Activated CD8-positive, alpha-beta T cell treated with anti-CD3 and anti-CD28 coated beads, Interleukin-2, amount 10 ng/mL, durations not matched to agents 7 days and 5 days (primary cell): ENCODE measurements at regions of chr3 and their contacts with region 1.

Region 1: DNA sequence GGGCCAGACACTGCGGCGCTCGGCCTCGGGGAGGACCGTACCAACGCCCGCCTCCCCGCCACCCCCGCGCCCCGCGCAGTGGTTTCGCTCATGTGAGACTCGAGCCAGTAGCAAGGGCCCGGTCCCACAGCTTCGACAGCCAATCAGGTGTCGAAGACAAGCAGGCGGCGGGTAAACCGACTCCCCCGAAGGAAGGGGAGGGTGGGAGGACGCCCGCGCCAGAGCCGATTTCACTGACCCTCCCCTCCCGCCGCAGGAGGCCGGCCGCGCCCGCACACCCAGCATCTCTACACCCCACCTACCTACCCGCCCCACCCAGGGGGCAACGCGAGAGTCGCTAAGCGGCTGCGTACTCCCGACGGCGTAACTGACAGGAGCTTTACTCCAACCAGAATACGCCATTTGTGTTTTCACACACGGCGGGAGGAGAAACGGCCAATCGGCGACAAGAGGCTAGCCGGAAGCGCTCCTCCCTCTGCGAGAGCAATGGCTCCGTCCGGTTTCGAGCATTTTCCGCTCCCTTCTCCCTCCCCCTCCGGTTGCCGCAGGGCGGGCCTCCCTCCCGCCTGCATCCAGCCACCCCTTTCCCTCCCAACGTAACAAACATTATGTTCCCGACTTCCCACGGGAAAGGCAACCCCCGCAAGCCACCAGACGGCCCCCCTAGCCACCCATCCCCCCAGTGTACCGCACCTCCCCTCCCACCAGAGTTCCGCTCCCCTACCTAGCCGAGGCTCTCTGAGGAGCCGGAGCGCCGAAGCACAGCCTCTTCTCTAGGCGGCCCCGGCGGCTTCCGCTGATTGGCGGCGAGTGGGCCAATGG is 504 bp upstream of the SETD5 start:
- DNase-seq: peak; percentile 99
- ATAC-seq: peak; percentile 77
- H3K4me3 Mint-ChIP-seq: peak overlapping the region; percentile 94
- H3K27ac Mint-ChIP-seq: peak overlapping the region; percentile 96
- H3K4me1 Mint-ChIP-seq: peaks cover 68% of the 10 kb centered on the region
- H3K27me3 Mint-ChIP-seq: no peaks in the 10 kb centered on the region

Region 2: GRCh38 chr3:8503871-8504610 is 892.9 kb before region 1 on chr3:
- CTCF ChIA-PET with region 1: no interaction called
- POLR2A ChIA-PET with region 1: no interaction called
- DNase-seq: no peak
- ATAC-seq: no peak
- H3K4me3 Mint-ChIP-seq: no peak overlapping the region
- H3K27ac Mint-ChIP-seq: no peak overlapping the region
- H3K4me1 Mint-ChIP-seq: peaks cover 9% of the 10 kb centered on the region
- H3K27me3 Mint-ChIP-seq: peaks cover 22% of the 10 kb centered on the region

Region 3: DNA sequence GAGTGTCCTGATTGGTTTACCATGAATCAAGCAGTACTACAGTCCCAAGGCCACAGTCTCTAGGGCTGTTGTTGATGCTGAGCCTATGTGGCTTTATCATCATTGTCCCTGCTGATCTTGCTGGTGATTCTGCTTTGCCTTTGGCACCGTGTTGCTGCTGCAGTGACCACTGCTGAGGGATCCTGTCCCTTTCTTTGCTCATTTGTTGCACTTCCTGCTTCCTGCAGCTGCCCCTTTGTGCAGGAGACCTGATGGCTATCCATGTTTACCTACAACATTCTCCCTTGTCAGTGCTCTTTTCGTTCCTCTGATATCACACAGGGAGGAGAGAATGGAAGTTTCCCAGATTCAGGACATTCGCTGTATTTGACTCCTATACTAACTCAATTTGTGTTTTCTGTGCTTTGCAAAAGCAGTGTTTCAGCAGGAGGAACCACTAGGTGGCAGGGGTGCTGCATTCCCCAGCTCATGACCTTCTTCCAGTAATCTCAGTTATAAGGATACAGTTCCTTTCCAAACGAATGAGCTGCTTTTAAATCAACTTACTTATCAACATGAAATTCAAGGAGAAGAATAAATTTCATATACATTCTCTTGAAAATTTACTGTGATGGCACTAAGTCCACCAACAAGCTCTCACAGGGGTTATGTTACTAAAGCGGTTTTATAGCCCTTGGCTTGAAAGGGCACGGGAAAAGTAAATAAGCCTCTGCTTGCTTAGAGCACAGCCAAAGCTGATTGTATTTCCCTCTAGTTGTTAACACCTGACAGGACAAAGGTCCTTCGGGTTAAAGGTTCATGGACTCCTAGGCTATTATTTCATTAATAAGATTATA is 43.8 kb before region 1 on chr3:
- CTCF ChIA-PET with region 1: interaction called, 11 read pairs
- POLR2A ChIA-PET with region 1: interaction called, 5 read pairs
- DNase-seq: peak; percentile 73
- ATAC-seq: peak; percentile 81
- H3K4me3 Mint-ChIP-seq: no peak overlapping the region
- H3K27ac Mint-ChIP-seq: peak overlapping the region; percentile 43
- H3K4me1 Mint-ChIP-seq: peaks cover 22% of the 10 kb centered on the region
- H3K27me3 Mint-ChIP-seq: no peaks in the 10 kb centered on the region

Region 4: DNA sequence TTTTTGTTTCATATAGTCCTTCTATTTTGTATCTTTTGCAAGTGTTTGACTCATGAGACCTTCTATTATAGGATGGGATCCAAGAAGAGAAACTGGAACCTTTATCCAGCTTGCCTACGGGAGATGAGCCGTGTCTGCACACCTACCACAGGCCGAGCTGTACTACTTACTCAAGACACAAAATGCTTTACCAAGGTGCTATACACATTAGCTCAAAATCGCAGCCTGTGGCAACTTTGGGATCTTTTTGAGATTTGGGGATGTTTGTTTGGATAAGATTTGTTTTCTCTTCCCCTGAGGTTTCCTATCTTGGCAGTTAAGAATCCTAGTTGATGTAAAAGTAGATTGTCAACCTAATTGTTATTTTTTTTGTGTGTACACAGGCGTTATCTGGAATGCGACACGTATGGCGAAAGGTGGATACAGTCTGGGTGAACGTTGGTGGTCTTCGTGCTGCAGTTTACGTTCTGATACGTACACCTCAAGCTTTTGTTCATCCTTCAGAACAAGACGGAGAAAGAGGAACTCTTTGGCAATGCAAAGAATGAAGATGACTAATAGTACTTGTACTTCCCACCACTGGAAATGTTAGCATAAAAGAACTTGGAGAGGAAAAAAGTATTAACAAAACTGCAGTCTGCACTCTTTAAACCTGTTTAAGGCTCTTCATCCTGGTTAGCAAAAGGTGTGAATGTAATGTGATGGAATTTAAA is 12.6 kb before region 1 on chr3:
- CTCF ChIA-PET with region 1: interaction called, 15 read pairs
- POLR2A ChIA-PET with region 1: interaction called, 44 read pairs
- DNase-seq: no peak
- ATAC-seq: no peak
- H3K4me3 Mint-ChIP-seq: no peak overlapping the region
- H3K27ac Mint-ChIP-seq: no peak overlapping the region
- H3K4me1 Mint-ChIP-seq: peaks cover 16% of the 10 kb centered on the region
- H3K27me3 Mint-ChIP-seq: no peaks in the 10 kb centered on the region

Region 5: DNA sequence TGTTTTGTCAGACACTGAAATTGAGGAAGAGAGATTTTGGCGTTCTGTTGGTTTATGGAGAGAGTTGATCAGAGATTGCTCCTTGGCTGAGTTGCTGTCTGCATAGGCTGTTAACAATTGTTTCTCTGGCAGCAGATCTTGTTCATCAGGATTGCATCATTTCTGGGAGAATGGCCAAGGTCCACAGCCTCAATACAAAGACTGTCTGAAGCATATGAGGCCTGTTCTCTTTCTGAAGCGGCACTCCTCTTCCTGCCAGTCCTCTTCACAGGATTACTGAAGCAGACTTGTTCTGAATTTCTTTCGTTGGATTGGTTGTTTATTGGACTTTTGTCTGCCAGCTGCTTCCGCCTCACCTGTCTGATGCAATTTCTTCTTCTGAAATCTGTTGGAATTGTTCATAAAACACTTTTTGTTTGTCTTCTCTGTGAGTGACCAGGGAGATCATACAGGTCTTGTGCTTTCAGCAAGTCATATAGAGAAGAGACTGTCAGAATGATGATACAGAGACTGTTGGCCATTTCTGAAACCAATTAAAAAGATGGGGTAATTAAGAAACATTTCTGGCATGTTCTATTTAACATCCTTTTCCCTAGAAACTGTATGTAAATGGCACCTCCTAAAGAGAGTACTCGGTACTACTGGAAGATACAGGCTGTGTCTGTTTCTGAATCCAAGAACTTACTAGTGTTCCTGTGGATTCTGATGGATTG is 26.0 kb after region 1 on chr3:
- CTCF ChIA-PET with region 1: interaction called, 24 read pairs
- POLR2A ChIA-PET with region 1: interaction called, 15 read pairs
- DNase-seq: no peak
- ATAC-seq: peak; percentile 60
- H3K4me3 Mint-ChIP-seq: no peak overlapping the region
- H3K27ac Mint-ChIP-seq: peak overlapping the region; percentile 66
- H3K4me1 Mint-ChIP-seq: peaks cover 31% of the 10 kb centered on the region
- H3K27me3 Mint-ChIP-seq: no peaks in the 10 kb centered on the region

Region 6: GRCh38 chr3:9731206-9732079 is 334.5 kb after region 1 on chr3 and contains the start of gene BRPF1:
- CTCF ChIA-PET with region 1: no interaction called
- POLR2A ChIA-PET with region 1: interaction called, 17 read pairs
- DNase-seq: peak; percentile 100
- ATAC-seq: peak; percentile 97
- H3K4me3 Mint-ChIP-seq: peak within 1 kb of the TSS; percentile 99
- H3K27ac Mint-ChIP-seq: peak within 1 kb of the TSS; percentile 97
- H3K4me1 Mint-ChIP-seq: peaks cover 67% of the 10 kb centered on the region
- H3K27me3 Mint-ChIP-seq: no peaks in the 10 kb centered on the region
- total RNA-seq, gene BRPF1: 54.7 to 57.4 TPM